Adrenal gland (tissue), 19 donors: ENCODE measurements at regions of chr5 and their contacts with region 1.

Region 1: GRCh38 chr5:134140530-134141201 is 26.2 kb downstream of the TCF7 start:
- DNase-seq: peak; percentile 75 to 95 (median 91)
- H3K4me3 ChIP-seq: no peak overlapping the region
- H3K27ac ChIP-seq: peak overlapping the region in 2 of 5 donors; percentile 23 to 38
- H3K4me1 ChIP-seq: peaks cover 4 to 18% of the 10 kb centered on the region in 2 donors
- H3K27me3 ChIP-seq: no peaks in the 10 kb centered on the region
- CTCF ChIP-seq: peak; percentile 64 to 86 (median 82)
- POLR2A ChIP-seq: no peak

Region 2: DNA sequence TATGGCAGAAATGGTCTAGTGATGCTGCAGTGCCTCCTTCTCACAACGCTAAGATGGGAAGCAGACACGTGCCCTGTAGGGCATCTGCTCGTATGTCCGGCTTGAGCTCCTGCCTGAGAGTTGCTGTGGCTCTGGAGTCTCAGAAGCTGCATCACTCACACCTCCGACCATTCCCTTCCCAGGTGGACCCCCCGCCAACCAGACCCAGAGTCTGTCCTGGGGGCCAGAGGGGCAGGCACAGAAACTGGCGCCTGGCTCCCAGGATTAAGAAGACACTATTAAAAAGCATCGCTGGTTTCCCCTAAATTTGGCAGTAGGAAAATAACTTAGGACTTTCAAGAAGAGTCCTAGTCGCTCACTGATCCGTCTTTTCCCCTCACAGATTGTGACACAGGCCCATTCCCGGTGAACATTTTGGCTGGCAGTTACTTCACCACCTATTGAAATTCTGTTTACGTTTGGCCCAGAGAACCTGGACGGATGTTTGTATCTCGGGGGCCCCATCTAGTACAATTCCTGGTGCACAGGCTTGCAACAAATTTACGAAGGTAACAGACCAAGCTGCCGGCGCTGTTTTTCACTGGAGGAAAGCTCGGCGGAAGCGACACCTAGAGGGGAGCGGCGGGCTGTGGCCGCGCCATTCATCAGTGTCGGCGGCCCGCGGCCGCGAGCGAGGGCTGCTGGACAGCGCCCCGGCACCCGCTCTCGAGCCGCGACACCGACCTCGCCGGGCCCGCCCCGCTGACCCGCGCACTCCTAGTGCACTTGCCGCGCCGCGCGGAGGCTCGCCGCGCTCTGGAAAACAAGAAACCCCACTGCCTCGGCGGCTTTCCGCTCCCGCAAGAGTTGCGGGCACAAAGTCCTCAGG is 529.9 kb before region 1 on chr5:
- intact Hi-C with region 1: no loop called
- DNase-seq: peak; percentile 64 to 80 (median 74)
- H3K4me3 ChIP-seq: peak overlapping the region in 2 of 4 donors; percentile 3 to 55
- H3K27ac ChIP-seq: no peak overlapping the region
- H3K4me1 ChIP-seq: peaks cover 18 to 26% of the 10 kb centered on the region in 2 donors
- H3K27me3 ChIP-seq: peaks cover 24% of the 10 kb centered on the region
- CTCF ChIP-seq: peak; percentile 7 to 49 (median 38)
- POLR2A ChIP-seq: peak in 1 of 2 donors; percentile 46

Region 3: DNA sequence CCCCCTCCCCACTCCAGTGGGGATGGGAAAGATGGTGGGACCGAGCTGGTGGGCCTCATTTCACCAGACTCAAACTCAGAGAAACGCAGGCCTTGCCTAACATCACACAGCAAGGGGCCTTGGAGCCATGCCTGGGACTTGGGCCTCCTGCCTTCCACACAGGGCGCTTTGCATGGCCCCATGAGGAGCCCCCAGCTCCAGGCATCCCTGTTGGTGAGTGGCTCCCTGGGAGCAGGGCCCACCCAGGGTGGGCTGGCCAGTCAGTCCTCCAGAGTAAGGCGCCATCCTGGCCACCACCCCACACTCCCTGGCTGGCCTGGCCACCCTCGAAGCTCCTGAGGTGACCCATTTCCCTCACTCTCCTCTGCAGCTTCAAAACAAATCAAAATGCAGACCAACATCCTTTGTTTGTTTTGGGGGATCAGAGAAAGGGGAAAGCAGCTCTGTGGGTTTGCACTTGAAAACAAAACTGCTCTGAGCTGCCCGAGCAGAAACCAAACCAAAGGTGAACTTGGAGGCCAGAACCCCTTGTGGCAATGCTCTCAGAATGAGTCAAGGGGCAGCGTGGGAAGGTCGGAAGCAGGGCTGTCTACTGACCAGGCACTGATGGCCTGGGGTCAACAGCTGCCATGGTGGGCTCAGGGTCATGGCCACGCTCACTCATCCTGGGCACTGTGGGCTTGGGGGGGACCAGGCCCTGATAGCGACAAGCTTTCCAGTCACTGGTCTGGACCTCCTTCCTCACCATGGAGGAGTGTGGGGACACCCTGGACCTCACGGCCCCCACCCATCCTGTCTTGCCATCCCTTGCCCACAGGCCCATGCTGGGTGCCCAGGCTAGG is 98.9 kb before region 1 on chr5:
- intact Hi-C with region 1: loop called (anchors 2 to 5 kb)
- DNase-seq: no peak
- H3K4me3 ChIP-seq: no peak overlapping the region
- H3K27ac ChIP-seq: no peak overlapping the region
- H3K4me1 ChIP-seq: no peaks in the 10 kb centered on the region
- H3K27me3 ChIP-seq: no peaks in the 10 kb centered on the region
- CTCF ChIP-seq: no peak
- POLR2A ChIP-seq: no peak

Region 4: DNA sequence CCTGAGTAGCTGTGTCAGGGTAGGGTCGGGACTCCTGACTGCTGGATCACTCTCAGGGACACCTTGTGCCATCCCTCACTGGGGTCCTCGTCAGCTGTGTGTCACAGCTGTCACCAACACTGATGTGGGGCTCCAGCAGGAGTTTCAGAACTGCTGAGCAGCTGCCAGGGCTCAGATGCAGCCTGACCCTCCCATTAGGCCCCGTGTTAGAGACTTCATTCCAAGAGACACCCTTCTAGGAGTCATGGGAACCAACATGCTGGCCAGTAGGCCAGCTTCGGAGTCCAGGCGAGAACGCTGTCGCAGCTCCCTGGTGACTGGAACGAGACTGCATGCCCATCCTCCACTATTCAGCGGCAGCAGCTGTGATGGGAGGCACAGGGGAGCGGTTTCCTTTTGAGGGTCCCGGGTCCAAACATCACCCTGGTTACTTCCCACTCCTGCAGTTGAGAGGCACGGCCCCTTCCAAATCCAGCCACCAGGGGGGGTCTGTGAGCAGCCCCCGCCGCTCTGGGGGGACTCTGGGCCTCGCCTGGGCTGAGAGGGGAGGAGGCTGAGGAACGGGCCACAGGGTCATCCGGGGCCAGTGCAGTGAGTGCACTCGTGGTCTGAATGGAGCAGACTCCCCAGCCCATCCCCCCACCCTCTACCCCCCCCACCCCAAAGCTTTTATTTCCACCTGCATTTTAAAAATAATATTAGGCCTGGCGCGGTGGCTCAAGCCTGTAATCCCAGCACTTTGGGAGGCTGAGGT is 38.8 kb before region 1 on chr5:
- intact Hi-C with region 1: loop called in 1 of 2 experiments (anchors 5 kb)
- DNase-seq: peak; percentile 43 to 71 (median 62)
- H3K4me3 ChIP-seq: no peak overlapping the region
- H3K27ac ChIP-seq: no peak overlapping the region
- H3K4me1 ChIP-seq: no peaks in the 10 kb centered on the region
- H3K27me3 ChIP-seq: no peaks in the 10 kb centered on the region
- CTCF ChIP-seq: peak; percentile 53 to 85 (median 76)
- POLR2A ChIP-seq: no peak